MCF 10A (cell line): ENCODE measurements at regions of chr1 and their contacts with region 1.

Region 1: DNA sequence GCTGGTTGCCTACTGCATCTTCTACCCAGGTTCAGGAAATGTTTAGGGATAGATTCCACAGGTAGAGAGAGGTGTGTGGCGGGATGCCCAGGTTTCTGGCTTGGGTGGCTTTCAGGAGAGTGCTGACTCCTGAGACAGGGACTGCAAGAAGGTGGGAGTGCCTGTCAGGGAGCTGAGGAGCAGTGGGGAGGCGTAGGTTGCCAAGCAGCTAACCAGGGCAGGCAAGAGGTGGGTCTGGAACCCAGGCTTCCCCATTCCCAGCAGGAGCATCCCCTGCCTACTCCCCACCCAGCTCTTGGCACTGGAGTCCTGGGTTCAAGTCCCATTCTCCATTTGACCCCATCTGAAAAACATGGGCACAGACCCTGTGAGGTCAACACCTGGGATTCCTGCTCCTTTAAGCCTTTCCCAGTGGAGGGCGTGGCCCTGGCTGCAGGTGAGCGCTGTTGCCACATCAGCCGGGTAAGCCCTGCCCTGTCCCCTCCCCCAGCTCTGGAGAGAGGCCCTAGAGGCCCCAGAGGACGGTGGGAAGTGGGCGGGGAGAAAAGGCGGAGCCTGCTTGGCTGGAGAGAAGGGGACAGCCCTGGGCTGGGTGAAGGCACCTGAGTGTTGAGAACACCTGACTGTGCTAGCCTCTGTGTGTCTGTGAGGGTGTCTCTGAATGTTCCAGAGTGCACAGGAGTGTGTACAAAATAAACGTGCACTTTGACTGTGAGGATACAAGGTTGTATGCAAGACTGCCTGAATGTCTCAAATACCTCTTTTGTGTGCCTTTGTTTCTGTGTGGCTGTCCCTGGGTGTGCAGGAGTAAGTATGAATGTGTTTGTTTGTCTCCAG is 14.0 kb upstream of the SYNC start:
- DNase-seq: peak; percentile 96
- H3K4me3 Mint-ChIP-seq: peak overlapping the region; percentile 38
- H3K27ac Mint-ChIP-seq: peak overlapping the region; percentile 70
- H3K4me1 Mint-ChIP-seq: peaks cover 19% of the 10 kb centered on the region
- H3K27me3 Mint-ChIP-seq: no peaks in the 10 kb centered on the region
- CTCF ChIP-seq: no peak

Region 2: DNA sequence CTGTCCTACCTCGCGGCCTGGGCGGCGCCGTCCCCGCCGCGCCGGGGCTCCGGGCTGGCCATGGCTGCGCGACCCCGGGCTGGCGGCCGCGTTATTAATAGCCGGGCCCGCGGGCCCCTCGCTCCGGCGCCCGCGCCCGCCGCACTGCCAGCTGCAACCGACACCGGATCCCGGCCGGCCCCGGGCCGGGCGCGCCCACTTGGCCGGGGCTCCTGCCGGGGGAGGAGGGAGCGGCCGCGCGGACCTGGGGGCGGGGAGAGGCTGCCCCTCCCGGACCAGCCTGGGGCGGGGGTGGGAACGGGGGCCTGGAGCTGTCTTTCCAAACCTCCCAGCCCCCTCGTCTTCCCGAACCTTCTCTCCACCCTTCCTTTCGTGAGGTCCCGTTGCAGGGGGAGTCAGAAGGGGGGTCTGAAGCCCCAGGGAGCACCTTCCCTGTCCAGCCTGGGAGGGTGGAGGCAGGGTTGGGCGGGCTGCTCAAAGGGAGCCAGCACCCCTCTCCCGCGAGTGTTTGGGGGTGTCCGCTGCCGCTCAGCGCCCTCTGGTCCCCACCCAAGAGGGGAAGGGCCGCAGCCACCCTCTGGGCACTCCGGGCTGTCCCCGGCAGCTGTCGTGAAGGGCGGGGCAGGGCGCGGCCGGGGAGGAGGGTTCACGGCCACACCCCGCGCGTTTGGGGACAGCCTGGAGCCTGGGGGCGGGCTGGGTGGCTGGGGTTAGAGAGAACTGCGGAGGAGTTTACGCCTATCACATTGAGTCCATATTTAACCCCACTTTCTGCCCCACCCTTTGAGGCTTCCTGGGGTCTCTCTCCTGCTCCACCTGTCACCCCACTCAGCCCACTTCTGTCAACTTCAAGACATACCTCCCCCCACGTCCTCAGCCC is 13.7 kb before region 1 on chr1 and contains the start of gene SYNC:
- CTCF ChIA-PET with region 1: interaction called, 24 read pairs
- POLR2A ChIA-PET with region 1: interaction called, 6 read pairs
- intact Hi-C with region 1: no loop called
- DNase-seq: peak; percentile 25
- H3K4me3 Mint-ChIP-seq: peak within 1 kb of the TSS; percentile 66
- H3K27ac Mint-ChIP-seq: peak within 1 kb of the TSS; percentile 59
- H3K4me1 Mint-ChIP-seq: peaks cover 21% of the 10 kb centered on the region
- H3K27me3 Mint-ChIP-seq: no peaks in the 10 kb centered on the region
- CTCF ChIP-seq: no peak
- total RNA-seq, gene SYNC: 1.1 and 1.9 TPM in 2 replicates

Region 3: GRCh38 chr1:32753532-32754312 is 37.2 kb after region 1 on chr1:
- CTCF ChIA-PET with region 1: interaction called, 28 read pairs
- POLR2A ChIA-PET with region 1: interaction called, 70 read pairs
- intact Hi-C with region 1: no loop called
- DNase-seq: peak; percentile 74
- H3K4me3 Mint-ChIP-seq: peak overlapping the region; percentile 96
- H3K27ac Mint-ChIP-seq: no peak overlapping the region
- H3K4me1 Mint-ChIP-seq: peaks cover 16% of the 10 kb centered on the region
- H3K27me3 Mint-ChIP-seq: no peaks in the 10 kb centered on the region
- CTCF ChIP-seq: no peak

Region 4: GRCh38 chr1:32828341-32828740 is 111.8 kb after region 1 on chr1:
- CTCF ChIA-PET with region 1: no interaction called
- POLR2A ChIA-PET with region 1: no interaction called
- intact Hi-C with region 1: no loop called
- DNase-seq: no peak
- H3K4me3 Mint-ChIP-seq: no peak overlapping the region
- H3K27ac Mint-ChIP-seq: no peak overlapping the region
- H3K4me1 Mint-ChIP-seq: peaks cover 6% of the 10 kb centered on the region
- H3K27me3 Mint-ChIP-seq: no peaks in the 10 kb centered on the region
- CTCF ChIP-seq: peak; percentile 25

Region 5: GRCh38 chr1:32870615-32871363 is 154.3 kb after region 1 on chr1 and contains the start of gene FNDC5:
- CTCF ChIA-PET with region 1: interaction called, 24 read pairs
- POLR2A ChIA-PET with region 1: interaction called, 5 read pairs
- intact Hi-C with region 1: loop called (anchors 2 kb)
- DNase-seq: no peak
- H3K4me3 Mint-ChIP-seq: peak within 1 kb of the TSS; percentile 61
- H3K27ac Mint-ChIP-seq: no peak within 1 kb of the TSS
- H3K4me1 Mint-ChIP-seq: peaks cover 5% of the 10 kb centered on the region
- H3K27me3 Mint-ChIP-seq: peaks cover 12% of the 10 kb centered on the region
- CTCF ChIP-seq: no peak
- total RNA-seq, gene FNDC5: not detected in 2 replicates

Region 6: DNA sequence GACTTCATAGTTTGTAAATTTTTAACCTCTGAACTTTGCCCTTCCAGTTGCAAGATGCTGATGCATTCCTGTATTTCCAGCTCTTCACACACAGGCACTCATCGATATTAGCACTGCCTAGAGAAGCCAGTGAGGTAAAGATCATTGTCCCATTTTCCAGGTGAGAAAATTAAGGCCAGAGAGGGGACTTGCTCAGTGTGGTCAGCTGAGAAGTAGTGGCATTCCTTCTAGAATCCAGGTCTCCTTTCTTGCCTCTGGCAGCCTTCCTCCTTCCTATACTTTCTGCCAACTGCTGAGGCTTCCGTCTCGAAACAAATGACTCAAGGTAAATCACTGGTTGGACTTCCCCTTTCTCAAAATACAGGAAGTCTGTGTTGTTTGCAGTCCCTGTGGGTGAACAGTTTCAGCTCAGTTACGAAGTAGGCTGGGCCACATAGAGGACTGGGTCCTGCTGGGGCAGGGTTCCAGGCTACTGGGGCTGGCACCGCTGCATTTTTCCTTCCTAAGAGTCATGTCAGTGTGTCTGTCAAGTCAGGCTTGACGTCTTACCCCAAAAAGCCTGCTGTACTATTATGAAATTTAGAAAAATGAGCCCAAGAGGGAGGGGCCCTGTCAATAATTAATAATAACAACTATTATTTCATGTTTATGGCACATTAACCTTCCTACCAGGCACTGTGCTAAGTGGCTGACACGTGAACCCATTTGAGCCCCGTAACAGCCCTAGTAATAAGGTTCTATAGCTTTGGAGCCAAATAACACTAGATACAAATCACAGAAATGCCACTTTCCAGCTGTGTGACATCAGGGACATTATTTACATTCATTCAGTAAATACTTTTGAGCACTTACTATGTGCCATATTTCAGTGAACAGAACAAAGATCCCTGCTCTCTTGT is 264.7 kb after region 1 on chr1:
- CTCF ChIA-PET with region 1: no interaction called
- POLR2A ChIA-PET with region 1: no interaction called
- intact Hi-C with region 1: no loop called
- DNase-seq: peak; percentile 95
- H3K4me3 Mint-ChIP-seq: peak overlapping the region; percentile 6
- H3K27ac Mint-ChIP-seq: peak overlapping the region; percentile 95
- H3K4me1 Mint-ChIP-seq: peaks cover 14% of the 10 kb centered on the region
- H3K27me3 Mint-ChIP-seq: no peaks in the 10 kb centered on the region
- CTCF ChIP-seq: no peak

Region 7: GRCh38 chr1:33086384-33086850 is 369.9 kb after region 1 on chr1:
- CTCF ChIA-PET with region 1: interaction called, 3 read pairs
- POLR2A ChIA-PET with region 1: interaction called, 4 read pairs
- intact Hi-C with region 1: loop called (anchors 5 kb)
- DNase-seq: peak; percentile 80
- H3K4me3 Mint-ChIP-seq: no peak overlapping the region
- H3K27ac Mint-ChIP-seq: no peak overlapping the region
- H3K4me1 Mint-ChIP-seq: peaks cover 14% of the 10 kb centered on the region
- H3K27me3 Mint-ChIP-seq: no peaks in the 10 kb centered on the region
- CTCF ChIP-seq: peak; percentile 84